Posterior vena cava (tissue), 2 donors: ENCODE measurements at regions of chr10 and their contacts with region 1.

Region 1: GRCh38 chr10:14822879-14823755 is 14.7 kb downstream of the CDNF start:
- DNase-seq: no peak

Region 2: GRCh38 chr10:14536241-14537213 is 286.6 kb before region 1 on chr10:
- intact Hi-C with region 1: loop called (anchors 5 to 10 kb)
- DNase-seq: peak; percentile 88